ENCODE measurements at regions of chr6 and their contacts with region 1.

Region 1: DNA sequence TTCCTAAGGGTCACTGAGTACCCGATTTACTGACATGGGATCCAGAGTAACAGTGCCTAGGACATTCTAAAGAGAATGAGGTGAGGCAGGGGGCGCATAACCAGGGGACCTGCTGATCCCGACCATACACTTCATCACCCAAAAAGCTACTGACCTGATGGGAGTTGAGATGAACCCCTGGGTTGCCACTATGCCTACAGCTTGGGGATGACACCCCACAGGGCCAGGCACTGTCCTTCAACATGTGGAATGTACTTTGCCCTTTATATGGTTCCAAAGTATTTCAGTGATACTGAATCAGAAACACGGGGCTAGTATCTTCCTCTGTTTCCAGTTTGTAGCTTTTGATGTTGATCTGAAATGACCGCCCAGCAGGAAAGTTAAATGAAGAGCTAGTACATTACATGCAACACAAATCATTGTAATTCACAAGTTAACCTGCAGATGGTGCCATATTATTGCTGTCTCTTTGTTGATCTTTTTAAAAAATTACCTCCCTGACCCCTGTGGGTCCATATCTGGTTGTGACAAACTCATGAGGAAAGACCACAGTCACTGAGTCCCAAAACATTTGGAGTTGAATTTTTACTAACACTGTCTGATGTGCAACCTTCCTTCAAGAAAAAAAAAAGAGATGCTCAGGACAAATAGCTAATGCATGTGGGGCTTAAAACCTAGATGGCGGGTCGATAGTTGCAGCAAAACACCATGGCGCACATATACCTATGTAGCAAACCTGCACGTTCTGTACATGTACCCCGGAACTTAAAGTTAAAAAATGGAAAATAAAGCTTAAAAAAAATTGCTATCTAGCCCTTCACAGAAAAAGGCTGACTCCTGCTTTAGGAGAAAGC is 42.7 kb upstream of the GCNT2 start:
- DNase-seq: peak; percentile 60
- ATAC-seq: peak; percentile 21
- H3K4me3 ChIP-seq: no peak overlapping the region
- H3K4me3 Mint-ChIP-seq: no peak overlapping the region
- H3K27ac ChIP-seq: no peak overlapping the region
- H3K27ac Mint-ChIP-seq: no peak overlapping the region
- H3K4me1 ChIP-seq: no peaks in the 10 kb centered on the region
- H3K4me1 Mint-ChIP-seq: no peaks in the 10 kb centered on the region
- H3K27me3 ChIP-seq: no peaks in the 10 kb centered on the region
- H3K27me3 Mint-ChIP-seq: peaks cover 30% of the 10 kb centered on the region
- CTCF ChIP-seq: peak; percentile 80

Region 2: GRCh38 chr6:10465629-10466504 is 12.5 kb before region 1 on chr6:
- CTCF ChIA-PET with region 1: interaction called, 18 read pairs
- POLR2A ChIA-PET with region 1: no interaction called
- intact Hi-C with region 1: no loop called
- DNase-seq: peak; percentile 21
- ATAC-seq: no peak
- H3K4me3 ChIP-seq: no peak overlapping the region
- H3K4me3 Mint-ChIP-seq: no peak overlapping the region
- H3K27ac ChIP-seq: no peak overlapping the region
- H3K27ac Mint-ChIP-seq: no peak overlapping the region
- H3K4me1 ChIP-seq: no peaks in the 10 kb centered on the region
- H3K4me1 Mint-ChIP-seq: no peaks in the 10 kb centered on the region
- H3K27me3 ChIP-seq: peaks cover 0 to 9% (median 0%) of the 10 kb centered on the region in 4 experiments
- H3K27me3 Mint-ChIP-seq: peaks cover 34% of the 10 kb centered on the region
- CTCF ChIP-seq: peak; percentile 21

Region 3: DNA sequence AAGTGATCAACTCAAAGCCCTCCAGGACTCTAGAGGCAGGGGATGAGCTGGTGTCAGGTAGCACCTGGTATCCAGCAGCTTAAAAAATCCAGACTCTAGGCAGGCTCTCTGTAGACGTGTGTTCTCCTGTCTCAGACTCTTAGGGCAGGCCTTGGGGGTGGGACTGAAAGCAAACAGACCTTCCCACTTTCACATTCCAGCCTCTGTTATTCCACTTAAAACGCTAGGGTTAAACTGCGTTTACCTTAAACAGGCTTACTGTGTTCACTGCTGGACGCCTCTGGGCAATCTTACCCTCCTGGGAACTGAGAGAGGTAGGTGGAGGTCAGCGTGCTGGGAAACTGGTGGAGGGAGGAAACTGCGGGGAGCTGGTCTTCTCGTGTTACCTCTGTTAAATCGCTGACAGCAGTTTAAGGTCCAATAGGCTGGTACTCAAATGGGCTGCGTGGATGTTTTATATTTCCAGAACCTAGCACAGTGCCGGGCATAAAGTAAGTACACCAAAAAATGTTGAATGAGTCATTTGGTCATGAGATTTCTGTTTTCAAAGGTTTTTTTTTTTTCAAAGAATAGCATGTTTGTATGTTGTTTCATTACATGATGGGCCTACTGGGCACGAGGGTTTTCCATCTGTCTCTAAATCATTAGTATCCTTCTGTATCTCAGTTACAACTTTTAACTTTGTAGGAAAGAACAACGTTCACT is 42.8 kb after region 1 on chr6 and contains the start of gene GCNT2:
- CTCF ChIA-PET with region 1: no interaction called
- POLR2A ChIA-PET with region 1: no interaction called
- intact Hi-C with region 1: no loop called
- DNase-seq: no peak
- ATAC-seq: peak; percentile 21
- H3K4me3 ChIP-seq: no peak within 1 kb of the TSS
- H3K4me3 Mint-ChIP-seq: peak within 1 kb of the TSS; percentile 32
- H3K27ac ChIP-seq: no peak within 1 kb of the TSS
- H3K27ac Mint-ChIP-seq: peak within 1 kb of the TSS; percentile 50
- H3K4me1 ChIP-seq: peaks cover 14 to 19% of the 10 kb centered on the region in 2 donors
- H3K4me1 Mint-ChIP-seq: peaks cover 28% of the 10 kb centered on the region
- H3K27me3 ChIP-seq: no peaks in the 10 kb centered on the region
- H3K27me3 Mint-ChIP-seq: no peaks in the 10 kb centered on the region
- CTCF ChIP-seq: no peak
- total RNA-seq, gene GCNT2: 32.1 and 38.1 TPM in 2 replicates

Region 4: DNA sequence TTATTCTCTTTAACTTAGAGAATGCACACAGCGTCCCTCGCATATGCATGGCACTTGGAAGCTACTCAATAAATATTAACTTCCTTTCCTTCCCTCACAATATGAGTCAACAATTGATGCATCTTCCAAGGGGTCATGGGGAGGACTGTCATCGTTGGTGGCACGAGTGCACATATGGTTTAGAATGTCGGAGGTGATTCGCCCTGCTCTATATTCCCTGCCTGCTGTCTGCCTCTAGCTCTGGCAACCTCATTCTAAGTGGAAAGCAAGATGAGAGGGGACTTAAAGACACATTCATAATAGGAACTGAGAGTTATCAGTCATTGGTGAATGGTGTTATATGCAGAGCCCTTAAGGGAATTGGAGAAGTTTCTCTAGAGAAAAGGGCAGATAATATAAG is 315.3 kb after region 1 on chr6:
- CTCF ChIA-PET with region 1: interaction called, 11 read pairs
- POLR2A ChIA-PET with region 1: no interaction called
- intact Hi-C with region 1: no loop called
- DNase-seq: no peak
- ATAC-seq: no peak
- H3K4me3 ChIP-seq: no peak overlapping the region
- H3K4me3 Mint-ChIP-seq: no peak overlapping the region
- H3K27ac ChIP-seq: no peak overlapping the region
- H3K27ac Mint-ChIP-seq: no peak overlapping the region
- H3K4me1 ChIP-seq: no peaks in the 10 kb centered on the region
- H3K4me1 Mint-ChIP-seq: no peaks in the 10 kb centered on the region
- H3K27me3 ChIP-seq: no peaks in the 10 kb centered on the region
- H3K27me3 Mint-ChIP-seq: no peaks in the 10 kb centered on the region
- CTCF ChIP-seq: no peak

Region 5: DNA sequence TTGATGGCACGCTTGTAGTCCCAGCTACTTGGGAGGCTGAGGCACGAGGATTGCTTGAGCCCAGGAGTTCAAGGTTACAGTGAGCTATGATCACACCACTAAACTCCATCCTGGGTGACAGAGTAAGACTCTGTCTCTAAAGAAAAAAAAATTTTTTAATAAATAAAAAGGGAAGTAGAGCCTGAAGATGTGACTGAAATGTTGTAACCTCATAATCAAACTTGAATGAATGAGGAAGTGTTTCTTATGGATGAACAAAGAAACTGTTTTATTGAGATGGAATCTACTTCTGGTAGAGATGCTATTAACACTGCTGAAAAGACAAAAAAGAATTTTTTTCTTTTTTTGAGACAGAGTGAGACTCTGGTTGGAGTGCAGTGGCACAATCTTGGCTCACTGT is 353.2 kb after region 1 on chr6:
- CTCF ChIA-PET with region 1: no interaction called
- POLR2A ChIA-PET with region 1: no interaction called
- intact Hi-C with region 1: no loop called
- DNase-seq: no peak
- ATAC-seq: no peak
- H3K4me3 ChIP-seq: no peak overlapping the region
- H3K4me3 Mint-ChIP-seq: no peak overlapping the region
- H3K27ac ChIP-seq: no peak overlapping the region
- H3K27ac Mint-ChIP-seq: no peak overlapping the region
- H3K4me1 ChIP-seq: peaks cover 0 to 4% of the 10 kb centered on the region in 2 donors
- H3K4me1 Mint-ChIP-seq: no peaks in the 10 kb centered on the region
- H3K27me3 ChIP-seq: peaks cover 0 to 18% (median 15%) of the 10 kb centered on the region in 4 experiments
- H3K27me3 Mint-ChIP-seq: peaks cover 18% of the 10 kb centered on the region
- CTCF ChIP-seq: no peak

Region 6: GRCh38 chr6:11064836-11065235 is 586.4 kb after region 1 on chr6:
- CTCF ChIA-PET with region 1: interaction called, 60 read pairs
- POLR2A ChIA-PET with region 1: no interaction called
- intact Hi-C with region 1: no loop called
- DNase-seq: no peak
- ATAC-seq: no peak
- H3K4me3 ChIP-seq: no peak overlapping the region
- H3K4me3 Mint-ChIP-seq: no peak overlapping the region
- H3K27ac ChIP-seq: no peak overlapping the region
- H3K27ac Mint-ChIP-seq: no peak overlapping the region
- H3K4me1 ChIP-seq: no peaks in the 10 kb centered on the region
- H3K4me1 Mint-ChIP-seq: no peaks in the 10 kb centered on the region
- H3K27me3 ChIP-seq: peaks cover 0 to 3% (median 3%) of the 10 kb centered on the region in 4 experiments
- H3K27me3 Mint-ChIP-seq: peaks cover 18% of the 10 kb centered on the region
- CTCF ChIP-seq: no peak